ENCODE measurements at regions of chr4 and their contacts with region 1.

Region 1: DNA sequence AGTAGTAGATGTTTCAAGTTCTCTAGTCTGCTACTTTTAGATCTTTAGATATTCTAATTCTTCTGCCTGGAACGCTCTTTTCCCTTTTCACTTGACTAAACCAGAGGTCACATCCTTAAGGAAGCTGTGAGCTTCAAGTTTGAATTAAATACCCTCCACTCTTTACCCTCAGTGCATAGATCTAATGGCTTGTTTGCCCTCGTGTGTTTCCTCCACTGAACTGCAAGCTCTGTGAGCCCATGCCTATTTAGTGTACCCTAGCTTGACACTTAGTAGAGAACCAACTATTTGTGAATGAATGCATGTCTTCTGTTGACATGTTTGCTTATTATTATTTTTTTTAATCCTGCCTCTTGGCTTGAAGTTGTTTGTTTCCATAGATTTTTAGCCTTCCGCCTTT is 138.3 kb downstream of the PDE5A start:
- DNase-seq: no peak
- H3K4me3 ChIP-seq: no peak overlapping the region
- CTCF ChIP-seq: peak; percentile 32

Region 2: DNA sequence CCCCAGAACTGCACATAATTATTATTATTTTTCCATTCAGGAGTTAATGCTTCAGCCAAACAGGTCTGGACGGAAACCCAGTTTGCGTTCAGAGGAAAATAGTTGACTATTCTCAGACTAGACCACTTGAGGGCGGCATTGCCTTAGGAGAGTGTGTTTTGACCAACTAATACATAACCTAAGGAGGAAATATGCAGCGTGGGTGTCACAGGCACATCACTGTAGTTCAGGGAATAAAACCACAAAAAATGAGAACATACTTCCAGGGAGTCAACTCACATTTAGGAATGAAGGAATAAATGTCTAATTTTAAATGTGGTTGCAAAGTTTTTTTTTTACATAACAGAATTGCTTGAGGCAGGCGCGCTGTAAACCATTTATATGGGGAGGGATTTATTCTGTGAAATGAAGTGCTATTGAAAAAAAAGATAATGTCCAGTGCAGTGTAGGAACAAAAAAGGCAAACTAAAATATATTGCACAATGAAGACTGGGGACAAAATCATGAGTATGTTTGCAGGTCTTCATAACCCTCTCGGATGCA is 508.4 kb before region 1 on chr4:
- CTCF ChIA-PET with region 1: interaction called, 22 read pairs
- POLR2A ChIA-PET with region 1: no interaction called
- DNase-seq: peak; percentile 96
- H3K4me3 ChIP-seq: no peak overlapping the region
- CTCF ChIP-seq: peak; percentile 59

Region 3: DNA sequence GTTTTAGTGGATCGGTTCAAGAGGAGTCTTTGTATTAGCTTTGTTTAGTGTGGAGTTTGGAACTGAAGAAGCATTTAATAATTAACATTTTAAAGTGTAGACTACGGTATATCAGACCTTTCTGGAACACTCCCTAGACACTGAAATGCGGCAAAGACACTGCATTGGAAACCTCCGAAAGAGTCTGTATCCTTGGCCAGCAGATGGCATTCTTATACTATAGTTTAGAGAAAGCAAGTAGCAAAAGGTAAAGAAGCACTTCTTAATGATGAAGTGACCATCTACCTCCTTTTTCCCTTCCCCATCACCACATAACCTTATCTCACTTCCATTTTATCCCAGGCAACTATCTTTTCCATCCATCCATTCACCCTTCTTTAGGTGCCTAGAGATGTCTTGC is 176.0 kb before region 1 on chr4:
- CTCF ChIA-PET with region 1: interaction called, 102 read pairs
- POLR2A ChIA-PET with region 1: no interaction called
- DNase-seq: no peak
- H3K4me3 ChIP-seq: no peak overlapping the region
- CTCF ChIP-seq: peak; percentile 53

Region 4: DNA sequence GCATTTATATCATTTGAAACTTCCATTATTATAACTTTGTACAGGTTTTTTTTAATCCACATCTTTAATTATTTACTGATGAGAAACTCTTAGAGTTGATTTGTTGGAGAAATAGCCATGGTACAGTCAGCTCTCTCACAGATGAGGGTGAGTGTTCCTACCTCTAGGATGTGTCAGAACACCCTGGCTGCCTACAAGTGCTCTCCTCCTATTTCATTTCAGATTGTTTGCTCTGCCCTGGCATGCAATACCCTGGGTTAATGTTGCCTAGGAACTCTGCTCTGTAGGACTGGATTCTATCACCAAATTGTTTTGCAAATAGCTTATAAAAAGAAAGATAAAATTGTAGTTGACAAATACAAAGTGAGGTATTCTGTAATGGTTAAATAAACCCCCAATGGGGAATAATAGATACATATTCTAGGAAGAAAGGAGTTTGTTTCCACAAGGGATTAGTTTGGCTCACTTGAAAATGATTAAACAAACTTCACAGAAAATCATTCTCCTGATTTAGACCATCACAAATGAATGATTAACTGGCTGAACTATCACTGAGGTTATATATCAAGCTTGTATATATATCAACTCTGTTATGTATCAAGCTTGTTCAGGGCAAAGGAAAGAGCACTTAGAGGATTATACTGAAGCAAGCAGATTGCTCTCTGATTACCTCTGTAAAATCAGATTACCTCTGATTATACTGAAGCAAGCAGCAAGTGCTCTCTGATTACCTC is 11.7 kb before region 1 on chr4:
- CTCF ChIA-PET with region 1: interaction called, 13 read pairs
- POLR2A ChIA-PET with region 1: no interaction called
- DNase-seq: no peak
- H3K4me3 ChIP-seq: no peak overlapping the region
- CTCF ChIP-seq: no peak

Region 5: DNA sequence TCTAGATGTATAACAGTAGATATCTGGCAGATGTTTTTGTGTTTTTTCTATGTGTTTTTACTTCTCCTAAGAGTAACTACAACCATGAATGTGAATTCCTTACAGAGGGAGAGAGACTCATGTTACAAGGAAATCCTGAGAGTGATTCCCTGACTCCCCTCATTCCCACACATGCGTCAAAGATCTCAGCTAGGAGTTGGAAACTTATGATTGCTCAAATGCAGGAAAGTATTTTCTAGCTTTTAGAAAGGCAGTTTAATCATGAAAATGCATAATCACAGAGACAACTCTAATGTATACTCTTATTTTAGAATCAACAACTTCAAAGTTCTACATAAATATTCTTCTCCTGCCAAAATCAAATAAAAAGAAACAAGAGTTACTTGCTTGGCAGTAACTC is 16.5 kb after region 1 on chr4:
- CTCF ChIA-PET with region 1: interaction called, 11 read pairs
- POLR2A ChIA-PET with region 1: no interaction called
- DNase-seq: no peak
- H3K4me3 ChIP-seq: no peak overlapping the region
- CTCF ChIP-seq: no peak

Region 6: DNA sequence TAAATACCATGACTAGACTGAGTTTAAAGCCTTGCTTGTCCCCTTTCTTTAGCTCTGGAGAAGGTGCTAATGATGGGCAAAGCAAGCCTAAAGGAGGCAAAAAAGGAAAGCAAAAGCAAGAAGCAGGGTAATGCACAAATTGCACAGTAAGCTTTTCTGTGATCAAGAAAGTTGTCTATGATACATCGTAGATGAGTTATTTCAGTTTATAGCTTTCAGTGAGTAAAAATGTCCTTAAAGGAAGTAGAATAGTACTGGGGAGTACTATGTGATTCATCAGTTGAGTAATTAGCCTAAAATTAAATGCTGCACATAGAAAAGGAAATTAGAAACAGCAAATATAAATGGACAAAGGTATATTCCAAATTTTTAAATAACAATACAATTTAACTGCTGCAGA is 188.4 kb after region 1 on chr4:
- CTCF ChIA-PET with region 1: no interaction called
- POLR2A ChIA-PET with region 1: no interaction called
- DNase-seq: no peak
- H3K4me3 ChIP-seq: no peak overlapping the region
- CTCF ChIP-seq: no peak

Region 7: DNA sequence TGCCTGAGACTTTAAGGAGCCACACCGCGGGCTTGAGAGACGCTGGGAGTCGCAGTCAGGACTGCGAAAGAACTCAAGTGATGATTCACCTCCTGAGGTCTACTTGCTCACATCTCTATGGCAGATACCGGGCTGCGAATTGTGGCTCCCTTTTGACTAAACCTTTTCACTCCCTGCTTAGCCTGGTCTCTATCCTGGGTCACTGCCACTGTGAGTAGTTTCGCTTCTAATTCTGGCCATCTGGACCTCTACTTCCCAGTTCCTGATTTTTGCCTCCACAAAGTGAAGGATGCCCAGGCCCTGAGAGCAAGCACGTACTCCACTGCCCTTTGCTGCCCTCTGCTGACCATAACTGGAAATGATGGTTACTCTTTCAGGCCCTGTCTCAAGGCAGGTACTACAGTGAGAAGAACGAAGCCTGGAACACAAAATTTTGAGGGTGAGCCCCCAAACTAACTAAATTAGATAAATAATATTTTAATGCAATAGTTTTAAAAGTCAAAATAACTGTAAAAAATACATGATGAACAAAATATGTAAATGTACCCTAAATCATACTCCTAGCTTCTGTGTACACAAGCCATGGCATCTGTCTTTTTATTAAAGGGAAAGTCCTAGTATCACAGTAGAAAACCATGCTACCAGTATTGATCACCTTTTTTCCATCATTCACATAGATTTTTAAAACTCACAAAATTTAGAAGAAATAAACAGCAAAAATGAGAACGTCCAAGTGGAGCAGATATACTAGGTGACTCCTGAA is 559.6 kb after region 1 on chr4:
- CTCF ChIA-PET with region 1: interaction called, 13 read pairs
- POLR2A ChIA-PET with region 1: no interaction called
- DNase-seq: no peak
- H3K4me3 ChIP-seq: peak overlapping the region; percentile 52
- CTCF ChIP-seq: peak; percentile 86

Region 8: DNA sequence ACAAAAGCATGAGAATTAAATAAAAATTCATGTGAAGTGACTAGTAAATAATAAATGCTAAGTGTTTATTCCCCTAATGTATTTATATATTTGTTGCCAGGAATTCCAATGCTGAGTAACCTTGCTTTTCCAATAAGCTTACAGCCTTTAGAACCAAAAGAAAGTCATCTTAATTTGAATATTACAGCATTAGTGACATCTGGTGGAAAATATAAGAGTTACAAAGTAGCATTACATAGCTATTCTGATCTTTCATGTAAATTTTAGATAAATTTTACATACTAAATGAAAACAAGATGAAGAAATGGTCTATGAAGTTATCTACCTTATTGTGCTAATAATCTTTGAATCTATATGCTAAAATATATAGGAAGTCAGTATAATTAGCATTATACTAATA is 565.9 kb after region 1 on chr4:
- CTCF ChIA-PET with region 1: interaction called, 18 read pairs
- POLR2A ChIA-PET with region 1: no interaction called
- DNase-seq: no peak
- H3K4me3 ChIP-seq: no peak overlapping the region
- CTCF ChIP-seq: peak; percentile 10